Breast epithelium (tissue), 4 donors: ENCODE measurements at regions of chr7 and their contacts with region 1.

Region 1: DNA sequence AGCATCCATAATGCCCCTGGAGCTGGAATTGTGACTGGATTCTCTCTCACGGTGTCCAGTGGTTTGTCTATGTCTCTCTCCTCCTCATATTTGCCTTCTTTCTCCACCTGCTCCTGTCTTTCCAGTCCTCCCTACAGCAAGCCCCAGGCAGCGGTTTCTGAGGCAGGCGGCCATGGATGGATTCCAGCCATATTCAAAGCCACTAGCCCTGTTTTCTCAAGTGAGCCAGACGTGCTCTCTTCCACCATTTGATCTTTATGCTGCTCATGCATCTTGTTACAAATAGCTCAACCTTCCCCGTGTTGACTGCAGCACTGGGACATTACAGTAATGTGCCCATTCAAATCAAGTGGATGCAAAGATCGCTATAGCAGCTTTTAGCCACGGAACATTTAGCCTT is 387.2 kb upstream of the PODXL start:
- DNase-seq: no peak
- H3K4me3 ChIP-seq: no peak overlapping the region
- H3K27ac ChIP-seq: no peak overlapping the region
- H3K4me1 ChIP-seq: no peaks in the 10 kb centered on the region
- H3K27me3 ChIP-seq: peaks cover 0 to 21% of the 10 kb centered on the region in 2 donors
- CTCF ChIP-seq: no peak
- POLR2A ChIP-seq: no peak

Region 2: GRCh38 chr7:131959106-131959812 is 15.6 kb after region 1 on chr7:
- intact Hi-C with region 1: no loop called
- DNase-seq: no peak
- H3K4me3 ChIP-seq: no peak overlapping the region
- H3K27ac ChIP-seq: no peak overlapping the region
- H3K4me1 ChIP-seq: peaks cover 0 to 5% of the 10 kb centered on the region in 2 donors
- H3K27me3 ChIP-seq: no peaks in the 10 kb centered on the region
- CTCF ChIP-seq: no peak
- POLR2A ChIP-seq: no peak

Region 3: GRCh38 chr7:133217773-133218172 is 1274.1 kb after region 1 on chr7:
- intact Hi-C with region 1: loop called (anchors 5 kb)
- DNase-seq: no peak
- H3K4me3 ChIP-seq: no peak overlapping the region
- H3K27ac ChIP-seq: no peak overlapping the region
- H3K4me1 ChIP-seq: no peaks in the 10 kb centered on the region
- H3K27me3 ChIP-seq: no peaks in the 10 kb centered on the region
- CTCF ChIP-seq: no peak
- POLR2A ChIP-seq: no peak